ENCODE measurements at regions of chr9 and their contacts with region 1.

Region 1: GRCh38 chr9:88280816-88281382 is 107.3 kb upstream of the SPIN1 start:
- DNase-seq: no peak
- H3K4me3 ChIP-seq: no peak overlapping the region
- H3K27ac ChIP-seq: no peak overlapping the region
- H3K4me1 ChIP-seq: no peaks in the 10 kb centered on the region
- H3K27me3 ChIP-seq: no peaks in the 10 kb centered on the region
- CTCF ChIP-seq: no peak
- POLR2A ChIP-seq: no peak

Region 2: DNA sequence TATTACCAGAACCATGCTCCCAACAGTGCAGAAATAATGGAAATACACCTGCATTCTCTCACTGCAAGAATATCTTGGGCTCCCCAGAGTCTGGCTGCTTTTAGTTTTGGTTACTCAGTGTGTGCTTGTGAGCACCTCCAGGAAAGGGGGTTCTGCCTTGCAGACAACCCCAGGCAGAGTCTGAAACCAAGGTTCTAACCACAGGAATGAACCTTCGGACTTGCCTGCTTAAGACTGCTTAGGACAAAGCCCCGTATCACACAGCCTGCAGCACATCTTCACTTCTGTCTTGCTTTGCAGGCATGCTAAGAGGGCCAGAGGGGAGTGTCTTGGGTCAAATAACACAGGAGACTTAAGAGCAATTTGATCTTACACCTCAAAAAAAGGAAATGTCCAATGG is 47.8 kb before region 1 on chr9:
- intact Hi-C with region 1: loop called (anchors 2 kb)
- DNase-seq: no peak
- H3K4me3 ChIP-seq: no peak overlapping the region
- H3K27ac ChIP-seq: no peak overlapping the region
- H3K4me1 ChIP-seq: peaks cover 9% of the 10 kb centered on the region
- H3K27me3 ChIP-seq: no peaks in the 10 kb centered on the region
- CTCF ChIP-seq: no peak
- POLR2A ChIP-seq: no peak

Measured in vagina (tissue), 2 donors.